Cardiac septum (tissue), 1 donor: ENCODE measurements at regions of chr1 and their contacts with region 1.

Region 1: GRCh38 chr1:32500387-32501209 is 35.7 kb downstream of the ZBTB8B start:
- DNase-seq: peak; percentile 87

Region 2: GRCh38 chr1:32538887-32539583 is 38.4 kb after region 1 on chr1 and contains the start of gene ZBTB8A:
- intact Hi-C with region 1: loop called (anchors 1 kb)
- DNase-seq: peak; percentile 46
- total RNA-seq, gene ZBTB8A: 3.0 TPM

Region 3: GRCh38 chr1:32580348-32581017 is 79.9 kb after region 1 on chr1:
- intact Hi-C with region 1: no loop called
- DNase-seq: no peak

Region 4: DNA sequence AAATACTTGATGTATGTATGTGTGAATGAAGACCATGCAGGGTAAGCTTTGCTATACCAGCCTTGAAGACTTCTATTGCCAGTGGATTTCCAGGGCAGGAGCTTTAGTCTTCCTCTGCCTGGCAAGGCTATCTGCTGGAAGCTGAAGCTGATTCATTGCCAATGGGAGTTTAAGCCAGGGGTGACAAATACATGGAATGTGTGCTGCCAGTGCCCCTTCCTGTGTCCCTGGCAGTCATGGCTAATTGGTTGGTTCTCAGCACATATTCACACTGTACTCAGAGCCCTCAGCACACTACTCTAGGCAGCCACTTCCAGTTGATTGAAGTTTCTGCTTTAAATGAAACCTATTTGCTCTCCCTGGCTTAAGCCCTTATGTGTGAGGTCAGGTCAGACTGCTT is 973.3 kb after region 1 on chr1:
- intact Hi-C with region 1: no loop called
- DNase-seq: no peak